Breast epithelium (tissue), 4 donors: ENCODE measurements at regions of chr19 and their contacts with region 1.

Region 1: DNA sequence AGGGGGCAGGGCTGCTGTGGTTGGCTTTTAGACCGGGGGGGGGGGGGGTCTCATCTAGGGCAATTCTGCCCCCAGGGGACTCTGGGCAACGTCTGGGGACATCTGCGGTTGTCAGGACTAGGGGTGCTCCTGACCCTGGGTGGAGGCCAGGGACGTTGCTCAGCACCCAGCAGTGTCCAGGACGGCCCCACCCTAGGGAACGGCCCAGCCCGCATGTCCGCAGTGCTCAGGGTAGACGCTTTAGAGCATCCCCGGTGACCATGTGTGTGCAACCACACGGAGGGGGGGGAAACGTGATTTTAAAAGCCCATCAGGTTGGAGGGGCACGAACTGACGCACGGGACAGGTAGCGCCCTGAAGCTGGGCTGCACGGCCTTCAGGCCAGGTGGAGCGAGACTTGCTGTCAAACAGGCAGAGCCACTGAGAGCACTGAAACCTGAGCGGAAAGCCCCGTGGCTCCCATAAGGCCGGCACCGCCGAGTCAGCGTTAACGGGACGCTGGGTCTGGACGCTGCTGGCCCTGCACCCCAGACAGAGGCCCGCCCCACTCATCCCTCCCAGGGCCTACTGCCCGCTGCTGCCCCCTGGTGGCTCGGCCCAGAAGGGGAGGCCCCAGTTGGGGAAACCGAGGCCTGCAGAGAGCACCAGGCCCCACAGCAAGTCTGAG is 8.3 kb downstream of the CACTIN start:
- DNase-seq: no peak
- H3K4me3 ChIP-seq: peak overlapping the region in 1 of 3 donors; percentile 39
- H3K27ac ChIP-seq: no peak overlapping the region
- H3K4me1 ChIP-seq: no peaks in the 10 kb centered on the region
- H3K27me3 ChIP-seq: no peaks in the 10 kb centered on the region
- CTCF ChIP-seq: peak; percentile 82 to 93 (median 84)
- POLR2A ChIP-seq: no peak

Region 2: DNA sequence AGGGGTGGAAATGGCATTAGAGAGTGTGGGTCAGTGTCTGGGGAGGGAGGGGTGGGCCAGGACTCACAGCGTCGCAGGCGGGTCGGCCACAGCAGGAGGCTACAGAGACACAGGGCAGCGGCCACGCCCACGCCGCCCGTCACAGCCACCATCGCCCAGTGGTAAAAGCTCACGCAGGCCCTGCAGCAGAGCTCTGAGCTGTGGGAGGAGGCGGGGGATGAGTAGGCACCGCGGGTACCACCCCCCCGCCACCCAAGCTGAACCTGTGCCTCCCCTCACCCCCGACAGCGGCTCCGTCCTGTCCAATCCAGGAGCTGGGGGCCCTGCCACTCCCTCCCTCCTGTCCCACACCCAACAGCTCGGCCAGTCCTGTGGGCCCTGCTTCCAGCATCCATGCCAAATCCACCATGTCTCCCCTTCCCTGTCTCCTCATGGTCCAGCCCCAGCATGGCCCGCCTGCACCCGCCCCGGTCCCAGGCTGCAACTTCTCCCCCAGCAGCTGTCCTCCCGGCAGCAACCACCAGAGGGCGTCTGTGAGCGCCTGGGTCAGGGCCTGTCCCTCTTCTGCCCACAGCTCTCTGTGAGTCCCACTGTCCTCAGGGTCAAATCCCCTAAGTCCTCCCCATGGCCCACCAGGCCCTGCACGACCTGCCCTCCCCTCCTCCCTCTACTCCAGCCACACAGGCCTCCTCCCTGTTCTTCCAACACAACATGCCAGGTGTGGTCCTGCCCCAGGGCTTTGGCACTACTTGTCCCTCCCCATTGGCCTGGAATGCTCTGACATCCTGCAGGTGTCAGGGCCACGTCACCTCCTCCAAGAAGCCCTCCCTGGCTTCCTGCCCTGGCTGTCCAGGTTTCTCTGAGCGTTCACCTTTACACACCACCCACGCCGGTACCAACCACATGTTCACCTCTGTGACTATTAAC is 73.3 kb before region 1 on chr19:
- intact Hi-C with region 1: loop called (anchors 5 kb)
- DNase-seq: no peak
- H3K4me3 ChIP-seq: no peak overlapping the region
- H3K27ac ChIP-seq: no peak overlapping the region
- H3K4me1 ChIP-seq: no peaks in the 10 kb centered on the region
- H3K27me3 ChIP-seq: no peaks in the 10 kb centered on the region
- CTCF ChIP-seq: peak; percentile 83 to 92 (median 83)
- POLR2A ChIP-seq: no peak

Region 3: DNA sequence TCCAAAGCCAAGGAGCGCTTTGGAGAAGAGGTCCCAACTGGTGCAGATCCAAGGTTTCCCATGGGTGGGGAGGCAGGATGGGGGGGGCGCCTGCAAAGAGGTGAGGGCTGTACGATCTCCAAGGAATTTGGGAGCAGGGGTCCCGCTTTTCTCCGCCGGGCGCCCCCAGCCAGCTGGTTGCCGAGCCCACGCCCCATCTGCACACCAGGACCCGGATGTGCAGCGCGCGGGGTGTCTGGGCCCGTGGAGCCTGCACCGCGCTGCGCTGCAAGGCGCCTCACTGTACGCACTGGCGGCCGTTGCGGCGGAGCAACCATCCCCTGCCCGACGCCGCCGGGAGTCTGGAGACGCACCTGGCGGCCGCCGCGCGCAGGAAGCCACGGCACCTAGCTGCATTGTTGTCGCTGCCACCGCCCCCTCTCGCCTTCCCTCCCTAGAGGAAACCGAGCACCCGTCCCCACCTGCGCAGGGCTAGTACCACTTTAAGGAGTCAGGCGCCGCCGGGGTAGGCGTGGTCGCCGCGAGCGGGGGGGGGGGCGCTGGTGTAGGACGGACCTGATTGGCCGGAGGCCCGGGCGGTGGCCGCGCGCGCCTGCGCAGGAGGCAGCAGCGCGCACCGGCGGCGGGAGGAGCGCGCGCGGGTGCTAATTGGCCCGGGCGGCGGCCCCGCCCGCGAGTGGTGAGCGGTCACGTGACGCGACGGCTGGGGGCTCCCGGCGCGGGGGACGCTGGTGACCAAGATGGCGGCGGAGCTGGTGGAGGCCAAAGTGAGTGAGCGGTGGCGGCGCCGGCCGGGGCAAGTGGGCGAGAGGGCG is 389.0 kb after region 1 on chr19 and contains the start of gene PIAS4:
- intact Hi-C with region 1: no loop called
- DNase-seq: peak; percentile 95 to 96
- H3K4me3 ChIP-seq: peak within 1 kb of the TSS; percentile 97 to 98 (median 97)
- H3K27ac ChIP-seq: peak within 1 kb of the TSS; percentile 90 to 93
- H3K4me1 ChIP-seq: peaks cover 4 to 22% of the 10 kb centered on the region in 2 donors
- H3K27me3 ChIP-seq: no peaks in the 10 kb centered on the region
- CTCF ChIP-seq: peak in 2 of 3 donors; percentile 11 to 29
- POLR2A ChIP-seq: no peak
- total RNA-seq, gene PIAS4: 9.4 to 17.0 (median 15.7) TPM